Activated CD8-positive, alpha-beta T cell treated with anti-CD3 and anti-CD28 coated beads, Interleukin-2, amount 10 ng/mL, durations not matched to agents 7 days and 5 days (primary cell): ENCODE measurements at regions of chr1 and their contacts with region 1.

Region 1: GRCh38 chr1:19661721-19662228 is 2.9 kb upstream of the HTR6 start:
- DNase-seq: peak; percentile 64
- ATAC-seq: no peak
- H3K4me3 Mint-ChIP-seq: no peak overlapping the region
- H3K27ac Mint-ChIP-seq: no peak overlapping the region
- H3K4me1 Mint-ChIP-seq: peaks cover 13% of the 10 kb centered on the region
- H3K27me3 Mint-ChIP-seq: peaks cover 32% of the 10 kb centered on the region

Region 2: GRCh38 chr1:19390901-19391595 is 270.7 kb before region 1 on chr1:
- CTCF ChIA-PET with region 1: interaction called, 10 read pairs
- POLR2A ChIA-PET with region 1: no interaction called
- DNase-seq: peak; percentile 79
- ATAC-seq: peak; percentile 77
- H3K4me3 Mint-ChIP-seq: peak overlapping the region; percentile 79
- H3K27ac Mint-ChIP-seq: peak overlapping the region; percentile 95
- H3K4me1 Mint-ChIP-seq: peaks cover 76% of the 10 kb centered on the region
- H3K27me3 Mint-ChIP-seq: no peaks in the 10 kb centered on the region

Region 3: DNA sequence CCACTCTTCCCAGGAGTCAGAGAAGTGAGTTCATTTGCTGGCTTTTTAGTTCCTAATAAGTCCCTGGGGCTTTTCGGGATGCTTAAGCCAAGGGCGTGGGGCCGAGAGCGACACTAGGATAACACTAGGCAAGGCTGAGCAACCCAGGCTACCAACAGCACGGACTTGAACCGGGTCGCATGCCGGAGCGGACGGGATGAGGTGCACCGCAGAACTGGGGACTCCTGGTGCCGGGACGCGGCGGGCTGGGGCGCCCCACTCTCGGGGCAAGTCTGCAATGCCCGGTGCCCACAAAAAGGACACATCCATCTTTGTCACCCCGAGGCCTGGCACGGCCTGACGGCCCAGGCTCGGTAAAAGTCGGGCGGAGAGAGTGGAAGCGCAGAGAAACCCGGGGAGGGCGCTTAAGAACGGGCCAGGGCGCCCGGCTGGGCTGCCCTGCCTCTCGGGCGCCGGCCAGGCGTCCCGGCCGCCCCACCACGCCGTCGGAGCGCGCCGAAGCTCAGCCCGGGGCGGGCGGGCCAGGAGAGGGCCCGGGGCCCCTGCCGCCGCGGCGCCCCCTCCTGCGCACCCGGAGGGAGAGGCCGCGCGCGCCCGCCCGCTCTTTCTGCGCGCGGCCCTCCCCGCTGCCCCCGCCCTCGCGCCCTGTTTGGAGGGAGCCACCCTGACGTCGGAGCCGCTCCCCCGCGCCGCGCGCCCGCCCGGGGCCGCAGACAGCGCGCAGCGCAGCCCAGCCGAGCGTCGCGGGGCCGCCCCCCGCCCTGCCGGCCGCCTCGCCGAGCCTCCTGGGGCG is 18.0 kb before region 1 on chr1 and contains the start of gene NBL1:
- CTCF ChIA-PET with region 1: interaction called, 21 read pairs
- POLR2A ChIA-PET with region 1: no interaction called
- DNase-seq: peak; percentile 82
- ATAC-seq: peak; percentile 87
- H3K4me3 Mint-ChIP-seq: peak within 1 kb of the TSS; percentile 93
- H3K27ac Mint-ChIP-seq: peak within 1 kb of the TSS; percentile 93
- H3K4me1 Mint-ChIP-seq: peaks cover 44% of the 10 kb centered on the region
- H3K27me3 Mint-ChIP-seq: peaks cover 14% of the 10 kb centered on the region
- total RNA-seq, gene NBL1: 40.1 TPM

Region 4: GRCh38 chr1:19651141-19651737 is 10.5 kb before region 1 on chr1:
- CTCF ChIA-PET with region 1: interaction called, 11 read pairs
- POLR2A ChIA-PET with region 1: no interaction called
- DNase-seq: peak; percentile 59
- ATAC-seq: peak; percentile 59
- H3K4me3 Mint-ChIP-seq: no peak overlapping the region
- H3K27ac Mint-ChIP-seq: peak overlapping the region; percentile 22
- H3K4me1 Mint-ChIP-seq: peaks cover 26% of the 10 kb centered on the region
- H3K27me3 Mint-ChIP-seq: no peaks in the 10 kb centered on the region

Region 5: GRCh38 chr1:19704247-19705113 is 42.7 kb after region 1 on chr1:
- CTCF ChIA-PET with region 1: interaction called, 103 read pairs
- POLR2A ChIA-PET with region 1: interaction called, 3 read pairs
- DNase-seq: peak; percentile 53
- ATAC-seq: peak; percentile 58
- H3K4me3 Mint-ChIP-seq: no peak overlapping the region
- H3K27ac Mint-ChIP-seq: no peak overlapping the region
- H3K4me1 Mint-ChIP-seq: peaks cover 12% of the 10 kb centered on the region
- H3K27me3 Mint-ChIP-seq: no peaks in the 10 kb centered on the region